HepG2 (cell line): ENCODE measurements at regions of chr1 and their contacts with region 1.

Region 1: DNA sequence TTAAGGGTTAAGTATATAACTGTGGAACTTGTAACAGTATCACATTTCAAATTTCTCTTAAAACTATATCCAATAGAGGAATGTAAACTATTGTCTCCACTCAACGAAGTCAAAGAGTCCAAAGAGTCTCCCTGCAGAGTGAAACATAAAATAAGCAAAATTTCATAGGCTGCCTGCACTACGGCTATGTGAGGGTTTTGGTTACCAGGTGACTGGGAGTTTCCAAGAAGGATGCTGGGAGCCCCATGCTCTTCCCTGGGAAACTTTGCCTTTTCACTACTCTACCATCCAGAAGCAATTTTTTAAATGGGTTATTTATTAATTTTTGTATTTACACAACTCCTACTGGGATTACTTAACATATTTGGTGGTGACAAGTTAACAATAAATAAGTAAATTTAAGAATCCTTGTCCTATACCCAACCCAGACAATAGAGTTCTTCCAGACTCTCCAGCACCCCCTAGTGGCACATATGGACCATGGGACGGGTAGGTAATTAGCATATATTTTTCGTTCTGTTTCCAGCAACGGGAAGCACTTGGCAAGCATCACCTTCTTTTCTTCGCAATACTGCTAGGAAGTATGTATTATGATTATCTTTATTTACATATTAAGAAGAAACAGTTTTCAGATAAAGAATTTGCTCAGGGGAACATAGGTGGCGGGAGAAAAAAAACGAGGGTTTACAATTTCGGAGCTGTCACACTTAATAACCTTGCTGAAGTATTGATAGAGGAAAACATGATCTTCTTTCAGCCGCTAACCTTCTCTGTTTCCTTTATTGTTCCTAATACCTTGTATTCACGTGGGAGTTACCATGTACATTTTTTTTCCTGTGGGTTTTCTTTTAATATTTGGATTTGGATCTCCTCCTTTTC is 3.5 kb downstream of the FMO2 start:
- DNase-seq: peak; percentile 43
- ATAC-seq: peak; percentile 88
- H3K4me3 ChIP-seq: no peak overlapping the region
- H3K27ac ChIP-seq: no peak overlapping the region
- H3K4me1 ChIP-seq: no peaks in the 10 kb centered on the region
- H3K27me3 ChIP-seq: no peaks in the 10 kb centered on the region
- CTCF ChIP-seq: peak; percentile 69
- EP300 ChIP-seq: no peak
- POLR2A ChIP-seq: no peak
- RAD21 ChIP-seq: no peak; the same call in 1 of the 2 replicates

Region 2: GRCh38 chr1:170967042-170967910 is 221.4 kb before region 1 on chr1:
- CTCF ChIA-PET with region 1: interaction called, 9 read pairs
- POLR2A ChIA-PET with region 1: no interaction called
- in situ Hi-C with region 1: no loop called
- intact Hi-C with region 1: loop called (anchors 1 kb)
- DNase-seq: peak; percentile 25
- ATAC-seq: peak; percentile 74
- H3K4me3 ChIP-seq: no peak overlapping the region
- H3K27ac ChIP-seq: no peak overlapping the region
- H3K4me1 ChIP-seq: no peaks in the 10 kb centered on the region
- H3K27me3 ChIP-seq: no peaks in the 10 kb centered on the region
- CTCF ChIP-seq: peak; percentile 55
- EP300 ChIP-seq: no peak
- POLR2A ChIP-seq: no peak
- RAD21 ChIP-seq: no peak